Heart right ventricle (tissue), 16 donors: ENCODE measurements at regions of chr4 and their contacts with region 1.

Region 1: DNA sequence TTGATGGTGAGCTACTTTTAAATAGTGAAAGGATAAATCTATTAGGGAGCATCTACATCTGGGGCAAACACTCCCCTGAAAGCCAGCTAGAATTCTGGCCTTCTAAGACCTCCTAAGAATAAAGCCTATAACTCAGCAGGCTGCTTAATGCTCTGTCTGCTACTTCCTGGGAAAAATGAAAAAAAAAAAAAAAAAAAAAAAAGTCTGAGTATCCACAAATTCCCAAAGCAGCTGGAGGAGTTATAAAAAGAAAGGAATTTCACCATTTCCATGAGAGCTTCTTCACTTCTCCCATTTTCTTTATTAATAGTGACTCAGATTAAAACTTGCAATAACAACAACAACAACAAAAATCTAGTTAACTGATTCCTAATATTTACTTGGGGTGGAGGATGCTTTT is 511.2 kb downstream of the INPP4B start:
- DNase-seq: no peak
- ATAC-seq: peak in 2 of 8 donors; percentile 41 to 45
- H3K4me3 ChIP-seq: no peak overlapping the region
- H3K27ac ChIP-seq: peak overlapping the region in 5 of 10 donors; percentile 1 to 50 (median 30)
- H3K4me1 ChIP-seq: peaks cover 0 to 41% (median 19%) of the 10 kb centered on the region in 9 donors
- H3K27me3 ChIP-seq: no peaks in the 10 kb centered on the region
- CTCF ChIP-seq: no peak

Region 2: DNA sequence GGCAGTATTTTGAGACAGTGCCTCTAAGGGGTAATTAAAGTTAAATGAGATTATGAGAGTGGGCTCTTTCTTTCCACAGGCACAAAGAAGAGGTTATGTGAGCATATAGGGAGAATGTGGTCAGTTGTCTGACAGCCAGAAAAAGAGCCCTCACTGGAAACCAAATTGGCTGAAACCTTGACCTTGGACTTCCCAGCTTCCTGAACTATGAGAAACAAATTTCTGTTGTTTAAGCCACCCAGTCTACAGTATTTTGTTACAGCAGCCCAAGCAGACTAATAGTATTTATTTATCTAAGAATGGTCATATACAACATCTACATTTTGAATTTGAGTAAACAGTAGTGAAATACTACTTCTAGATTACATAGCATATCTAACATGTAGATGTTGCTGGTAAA is 224.8 kb before region 1 on chr4:
- intact Hi-C with region 1: no loop called
- DNase-seq: no peak
- ATAC-seq: no peak
- H3K4me3 ChIP-seq: no peak overlapping the region
- H3K27ac ChIP-seq: no peak overlapping the region
- H3K4me1 ChIP-seq: no peaks in the 10 kb centered on the region
- H3K27me3 ChIP-seq: no peaks in the 10 kb centered on the region
- CTCF ChIP-seq: no peak

Region 3: GRCh38 chr4:142265536-142265935 is 69.4 kb before region 1 on chr4:
- intact Hi-C with region 1: loop called in 1 of 10 experiments (anchors 1 kb)
- DNase-seq: peak in 1 of 2 donors; percentile 36
- ATAC-seq: peak; percentile 52 to 94 (median 90)
- H3K4me3 ChIP-seq: no peak overlapping the region
- H3K27ac ChIP-seq: peak overlapping the region; percentile 18 to 87 (median 76)
- H3K4me1 ChIP-seq: peaks cover 0 to 38% (median 19%) of the 10 kb centered on the region in 9 donors
- H3K27me3 ChIP-seq: no peaks in the 10 kb centered on the region
- CTCF ChIP-seq: no peak